ENCODE measurements at regions of chr4 and their contacts with region 1.

Region 1: DNA sequence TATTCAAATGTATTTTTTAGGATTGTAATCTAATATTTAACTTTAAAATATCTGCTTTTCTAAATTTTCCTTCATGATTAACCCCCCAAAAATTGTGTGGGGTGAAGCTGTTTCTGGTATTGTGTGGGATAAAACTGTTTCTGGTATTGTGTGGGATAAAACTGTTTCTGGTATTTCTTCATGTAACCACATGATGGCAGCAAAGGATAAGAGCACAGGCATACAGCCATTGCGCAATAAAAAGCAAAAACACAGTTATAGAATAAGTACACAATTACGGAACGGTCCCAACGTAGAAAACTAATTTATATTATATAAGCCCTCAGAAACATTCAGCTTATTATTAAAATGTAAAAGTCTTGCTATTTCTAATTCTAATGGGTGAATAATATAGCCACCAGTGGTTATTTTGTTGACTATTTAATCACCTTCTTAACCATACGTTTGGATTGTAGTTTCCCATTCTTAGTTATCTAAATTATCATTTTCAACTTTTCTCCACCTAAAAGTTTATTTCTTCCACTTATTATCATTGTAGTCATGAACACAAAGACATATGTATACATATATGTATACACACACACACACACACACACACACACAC is 333.9 kb upstream of the FSTL5 start:
- DNase-seq: no peak
- H3K4me3 ChIP-seq: no peak overlapping the region
- H3K27ac ChIP-seq: no peak overlapping the region
- H3K4me1 ChIP-seq: no peaks in the 10 kb centered on the region
- H3K27me3 ChIP-seq: peaks cover 0 to 6% (median 0%) of the 10 kb centered on the region in 4 donors
- CTCF ChIP-seq: peak; percentile 49 to 87 (median 78)
- POLR2A ChIP-seq: no peak

Region 2: GRCh38 chr4:162347156-162347841 is 150.4 kb before region 1 on chr4:
- intact Hi-C with region 1: no loop called
- DNase-seq: no peak
- H3K4me3 ChIP-seq: no peak overlapping the region
- H3K27ac ChIP-seq: no peak overlapping the region
- H3K4me1 ChIP-seq: no peaks in the 10 kb centered on the region
- H3K27me3 ChIP-seq: no peaks in the 10 kb centered on the region
- CTCF ChIP-seq: no peak
- POLR2A ChIP-seq: no peak

Region 3: DNA sequence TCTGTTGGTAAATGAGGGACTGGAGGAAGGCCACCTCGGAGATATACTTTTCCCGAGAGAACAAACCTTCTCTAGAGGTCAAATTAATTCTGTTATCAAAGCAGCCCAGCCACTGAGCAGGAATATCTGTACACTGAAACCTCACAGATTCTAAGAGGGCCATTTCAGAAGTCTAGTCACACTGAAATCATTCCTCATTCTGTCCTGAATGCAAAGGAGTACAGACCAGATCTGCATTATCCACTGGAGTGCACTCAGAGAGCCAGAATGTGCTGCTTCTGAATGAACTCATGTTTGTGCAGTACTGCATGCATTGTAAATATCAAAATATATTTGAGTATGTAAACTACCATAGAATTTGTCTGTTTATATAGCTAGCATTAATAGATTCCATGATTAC is 55.5 kb before region 1 on chr4:
- intact Hi-C with region 1: no loop called
- DNase-seq: no peak
- H3K4me3 ChIP-seq: no peak overlapping the region
- H3K27ac ChIP-seq: no peak overlapping the region
- H3K4me1 ChIP-seq: no peaks in the 10 kb centered on the region
- H3K27me3 ChIP-seq: no peaks in the 10 kb centered on the region
- CTCF ChIP-seq: no peak
- POLR2A ChIP-seq: no peak

Region 4: DNA sequence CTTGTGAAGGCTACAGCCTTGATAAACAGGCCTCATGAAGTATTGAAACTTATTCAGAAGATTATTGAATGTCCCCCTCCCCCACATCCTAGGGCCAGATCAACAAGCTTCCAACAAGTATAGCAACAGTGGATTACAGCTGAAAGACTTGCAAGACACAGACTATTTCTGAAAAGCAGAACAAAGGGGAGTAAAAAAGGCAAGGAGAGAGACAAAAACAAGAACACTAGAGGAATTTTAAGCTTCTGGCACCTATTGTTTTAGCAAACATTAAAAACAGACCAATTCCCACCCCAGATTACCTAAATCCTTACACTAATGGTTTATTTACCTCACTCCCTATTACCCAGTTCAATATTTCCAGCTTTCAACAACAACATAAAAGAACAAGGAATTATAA is 112.5 kb after region 1 on chr4:
- intact Hi-C with region 1: no loop called
- DNase-seq: no peak
- H3K4me3 ChIP-seq: no peak overlapping the region
- H3K27ac ChIP-seq: no peak overlapping the region
- H3K4me1 ChIP-seq: no peaks in the 10 kb centered on the region
- H3K27me3 ChIP-seq: no peaks in the 10 kb centered on the region
- CTCF ChIP-seq: no peak
- POLR2A ChIP-seq: no peak

Region 5: GRCh38 chr4:163332500-163333406 is 835.1 kb after region 1 on chr4 and contains the start of gene NPY1R:
- intact Hi-C with region 1: loop called (anchors 10 kb)
- DNase-seq: no peak
- H3K4me3 ChIP-seq: peak within 1 kb of the TSS; percentile 29 to 71 (median 46)
- H3K27ac ChIP-seq: no peak within 1 kb of the TSS
- H3K4me1 ChIP-seq: peaks cover 0 to 26% (median 4%) of the 10 kb centered on the region in 3 donors
- H3K27me3 ChIP-seq: peaks cover 0 to 65% (median 3%) of the 10 kb centered on the region in 4 donors
- CTCF ChIP-seq: peak; percentile 24 to 63 (median 52)
- POLR2A ChIP-seq: no peak
- total RNA-seq, gene NPY1R: 0.48 to 2.4 (median 1.1) TPM in 3 of 4 donors, not detected in the other

Measured in esophagus squamous epithelium (tissue), 5 donors.